OCI-LY7 (cell line): ENCODE measurements at regions of chr13 and their contacts with region 1.

Region 1: GRCh38 chr13:91722267-91722884 is 324.0 kb downstream of the GPC5 start:
- DNase-seq: peak; percentile 84
- H3K4me3 ChIP-seq: no peak overlapping the region
- H3K27ac ChIP-seq: no peak overlapping the region
- H3K4me1 ChIP-seq: no peaks in the 10 kb centered on the region
- CTCF ChIP-seq: no peak

Region 2: GRCh38 chr13:91133941-91134802 is 588.2 kb before region 1 on chr13:
- CTCF ChIA-PET with region 1: no interaction called
- POLR2A ChIA-PET with region 1: no interaction called
- intact Hi-C with region 1: loop called (anchors 5 kb)
- DNase-seq: peak; percentile 88
- H3K4me3 ChIP-seq: no peak overlapping the region
- H3K27ac ChIP-seq: no peak overlapping the region
- H3K4me1 ChIP-seq: no peaks in the 10 kb centered on the region
- CTCF ChIP-seq: no peak

Region 3: DNA sequence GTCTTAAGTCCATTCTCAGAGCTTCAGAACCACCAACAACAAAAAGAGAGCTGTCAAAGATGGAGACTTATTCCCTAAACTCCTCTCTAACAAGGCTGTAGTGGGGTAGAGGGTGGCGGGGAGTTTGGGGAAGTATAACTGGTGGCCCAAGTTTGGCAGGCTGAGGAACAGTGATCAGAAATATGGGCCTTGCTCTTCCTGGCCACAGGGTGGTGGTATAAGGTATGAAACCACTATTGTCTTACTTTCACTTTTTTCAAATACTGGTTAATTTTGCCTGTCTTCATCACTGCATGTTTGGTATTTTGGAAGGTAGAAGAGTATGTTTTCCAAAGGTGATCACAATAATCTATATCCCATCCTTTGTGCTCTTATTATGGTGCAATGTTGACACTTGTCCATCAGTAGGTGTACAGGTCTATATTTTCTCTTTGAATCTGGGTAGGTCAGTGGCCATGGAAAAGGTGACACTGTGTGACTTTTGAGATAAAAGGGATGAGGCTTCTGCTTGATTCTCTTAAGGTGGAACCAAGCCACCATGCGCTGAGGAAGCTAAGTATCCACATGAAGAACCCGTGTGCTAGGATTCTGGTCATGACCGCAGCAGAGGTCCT is 347.2 kb before region 1 on chr13:
- CTCF ChIA-PET with region 1: no interaction called
- POLR2A ChIA-PET with region 1: no interaction called
- intact Hi-C with region 1: loop called (anchors 1 kb)
- DNase-seq: peak; percentile 85
- H3K4me3 ChIP-seq: no peak overlapping the region
- H3K27ac ChIP-seq: no peak overlapping the region
- H3K4me1 ChIP-seq: no peaks in the 10 kb centered on the region
- CTCF ChIP-seq: no peak

Region 4: DNA sequence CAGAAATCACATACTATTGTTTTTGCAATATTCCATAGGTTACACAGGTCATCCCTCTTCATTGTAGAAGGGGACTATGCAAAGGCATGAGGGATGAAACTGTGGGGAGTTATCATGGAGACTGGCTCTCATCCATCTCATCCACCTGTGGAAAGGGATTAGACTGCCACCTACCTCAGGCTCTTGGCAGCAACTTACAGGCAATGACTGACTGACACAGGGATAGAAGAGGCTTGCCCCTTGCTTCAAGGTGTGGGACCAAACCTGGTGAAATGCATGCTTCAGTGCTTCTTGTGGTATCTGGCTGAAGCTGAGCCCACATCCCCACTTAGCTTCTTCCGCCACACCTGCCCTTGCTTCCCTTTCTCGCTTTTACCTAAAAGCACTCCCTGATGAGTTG is 17.4 kb after region 1 on chr13:
- CTCF ChIA-PET with region 1: interaction called, 4 read pairs
- POLR2A ChIA-PET with region 1: interaction called, 16 read pairs
- intact Hi-C with region 1: no loop called
- DNase-seq: no peak
- H3K4me3 ChIP-seq: no peak overlapping the region
- H3K27ac ChIP-seq: no peak overlapping the region
- H3K4me1 ChIP-seq: no peaks in the 10 kb centered on the region
- CTCF ChIP-seq: no peak

Region 5: GRCh38 chr13:91792054-91792453 is 69.7 kb after region 1 on chr13:
- CTCF ChIA-PET with region 1: no interaction called
- POLR2A ChIA-PET with region 1: no interaction called
- intact Hi-C with region 1: no loop called
- DNase-seq: no peak
- H3K4me3 ChIP-seq: no peak overlapping the region
- H3K27ac ChIP-seq: no peak overlapping the region
- H3K4me1 ChIP-seq: no peaks in the 10 kb centered on the region
- CTCF ChIP-seq: no peak